ENCODE measurements at regions of chr6 and their contacts with region 1.

Region 1: DNA sequence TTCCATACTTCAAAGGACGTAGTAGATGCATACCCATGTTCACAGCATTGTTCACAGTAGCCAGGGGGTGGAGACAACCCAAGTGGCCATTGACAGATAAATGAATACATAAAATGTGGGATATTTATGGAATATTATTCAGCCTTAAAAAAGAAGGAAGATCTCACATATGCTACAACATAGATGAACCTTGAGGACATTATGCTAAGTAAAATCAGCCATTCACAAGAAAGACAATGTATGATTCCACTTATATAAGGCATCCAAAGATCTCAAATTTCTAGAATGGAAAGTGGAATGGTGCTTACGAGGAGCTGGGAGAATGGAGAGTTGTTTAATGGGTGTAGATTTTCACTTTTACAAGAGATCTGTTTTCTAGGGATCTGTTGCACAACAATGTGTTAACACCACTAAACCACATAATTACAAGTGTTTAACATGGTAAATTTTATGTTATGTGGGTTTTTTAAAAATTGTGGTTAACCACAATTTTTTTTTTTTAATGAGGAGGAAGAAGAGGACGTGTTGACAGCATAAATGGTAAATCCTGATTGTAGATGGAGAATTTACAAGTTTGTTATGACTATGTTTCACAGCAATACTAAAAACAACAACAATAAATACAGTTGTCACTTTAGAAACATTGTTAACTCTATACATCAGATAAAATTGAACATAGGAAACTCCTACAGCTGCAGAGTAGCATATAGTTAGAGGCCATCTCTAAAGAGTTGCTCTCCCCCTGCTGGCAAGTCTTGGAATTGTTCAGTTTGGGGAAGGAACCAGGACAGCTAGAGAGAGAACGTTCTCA is 41.6 kb downstream of the CCN2 start:
- DNase-seq: no peak

Region 2: DNA sequence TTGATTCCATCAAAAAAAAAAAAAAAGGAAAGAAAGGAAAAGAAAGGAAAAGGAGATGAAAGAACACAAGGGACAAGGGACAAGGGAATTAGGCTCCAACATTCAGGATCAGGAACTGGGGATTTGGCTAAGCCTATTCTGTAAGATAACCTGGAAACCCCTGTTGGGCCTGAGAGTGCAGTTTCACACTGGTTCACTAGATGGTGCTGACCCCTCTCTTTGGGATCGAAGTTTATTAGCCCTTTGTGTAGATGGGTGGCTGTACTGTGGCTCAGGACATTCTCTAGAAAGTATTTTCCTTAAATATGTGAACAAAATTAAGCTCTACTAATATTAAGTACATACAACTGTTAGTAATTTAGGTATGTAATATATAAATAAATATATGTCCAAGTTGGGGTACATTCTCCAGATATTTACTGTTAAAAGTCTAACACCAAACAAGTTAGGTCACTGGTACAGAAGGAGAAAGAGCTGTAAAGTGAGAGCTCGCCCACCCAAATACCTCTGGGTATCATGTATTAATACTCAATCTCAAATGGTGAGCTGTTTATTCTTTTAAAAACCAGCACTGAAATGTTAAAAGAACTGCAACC is 214.7 kb before region 1 on chr6:
- intact Hi-C with region 1: loop called in 1 of 2 experiments (anchors 5 kb)
- DNase-seq: no peak

Measured in posterior vena cava (tissue), 2 donors.